PC-9 (cell line): ENCODE measurements at regions of chr4 and their contacts with region 1.

Region 1: DNA sequence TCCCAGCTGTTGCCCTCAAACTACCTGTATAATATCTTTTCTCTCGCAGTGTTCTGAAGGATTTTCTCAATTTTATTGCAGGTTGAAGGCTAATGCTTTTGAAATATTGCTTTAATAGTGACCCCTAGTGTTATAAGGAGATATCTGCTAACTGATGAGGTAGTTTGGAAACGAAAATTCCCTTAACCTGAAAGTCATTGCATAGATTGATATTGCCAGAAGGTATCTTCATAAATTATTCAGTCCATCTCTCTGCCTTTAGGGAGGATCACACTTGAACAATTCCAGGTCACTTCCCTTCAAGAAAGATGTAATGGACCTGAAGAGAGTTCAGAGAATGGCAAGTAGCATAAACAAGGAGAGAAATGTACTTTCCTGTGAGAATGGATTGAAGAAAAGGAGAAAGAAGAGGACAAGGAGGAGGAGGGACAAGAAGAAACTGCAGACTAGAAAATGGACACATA is 44.1 kb downstream of the TIGD4 start:
- DNase-seq: no peak
- H3K4me3 ChIP-seq: no peak overlapping the region
- H3K27ac ChIP-seq: no peak overlapping the region
- H3K4me1 ChIP-seq: no peaks in the 10 kb centered on the region
- H3K27me3 ChIP-seq: no peaks in the 10 kb centered on the region
- CTCF ChIP-seq: peak; percentile 72

Region 2: GRCh38 chr4:151771664-151772063 is 963.8 kb before region 1 on chr4:
- CTCF ChIA-PET with region 1: no interaction called
- POLR2A ChIA-PET with region 1: no interaction called
- intact Hi-C with region 1: no loop called
- DNase-seq: no peak
- H3K4me3 ChIP-seq: no peak overlapping the region
- H3K27ac ChIP-seq: no peak overlapping the region
- H3K4me1 ChIP-seq: no peaks in the 10 kb centered on the region
- H3K27me3 ChIP-seq: no peaks in the 10 kb centered on the region
- CTCF ChIP-seq: no peak

Region 3: DNA sequence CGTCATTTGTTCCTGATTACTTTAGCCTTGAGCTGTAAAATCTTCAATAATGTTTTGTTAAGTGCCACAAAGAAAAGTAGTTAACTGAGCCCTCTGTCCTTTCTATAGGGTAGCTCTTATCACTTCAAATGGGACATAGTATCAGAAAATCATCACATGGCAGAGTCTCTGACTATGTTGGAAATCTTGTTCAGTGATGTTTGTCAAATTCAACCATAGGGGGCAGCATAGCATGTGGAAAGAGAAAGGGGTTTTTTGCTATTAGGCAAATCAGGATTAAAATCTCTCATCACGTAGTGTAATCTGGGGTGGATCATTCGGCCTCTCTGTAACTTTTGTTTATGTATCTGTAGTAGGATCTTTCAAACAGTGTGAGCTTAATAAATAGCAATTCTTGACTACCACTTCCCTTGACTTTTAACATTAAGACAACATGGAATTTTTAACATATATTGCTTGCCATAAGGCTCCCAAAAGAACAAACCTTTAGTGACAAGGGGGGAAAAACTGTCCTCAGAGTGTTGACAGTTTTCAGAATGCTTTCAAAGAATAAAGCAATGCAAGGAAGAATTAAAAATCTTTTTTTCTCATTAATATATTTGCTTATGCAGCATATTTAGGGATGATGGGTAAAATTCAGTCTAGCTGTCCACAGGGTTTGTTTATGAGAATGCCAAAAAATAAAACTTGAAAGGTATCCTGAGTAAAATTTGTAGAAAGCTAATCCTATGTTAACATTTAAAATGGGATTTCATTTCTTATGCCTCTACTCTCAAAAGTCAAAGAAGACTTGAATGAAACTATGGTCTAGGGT is 326.7 kb before region 1 on chr4:
- CTCF ChIA-PET with region 1: interaction called, 11 read pairs
- POLR2A ChIA-PET with region 1: no interaction called
- intact Hi-C with region 1: loop called (anchors 10 kb)
- DNase-seq: peak in 1 of 2 experiments; percentile 6
- H3K4me3 ChIP-seq: no peak overlapping the region
- H3K27ac ChIP-seq: no peak overlapping the region
- H3K4me1 ChIP-seq: no peaks in the 10 kb centered on the region
- H3K27me3 ChIP-seq: no peaks in the 10 kb centered on the region
- CTCF ChIP-seq: peak; percentile 65

Region 4: GRCh38 chr4:152640058-152640833 is 95.2 kb before region 1 on chr4:
- CTCF ChIA-PET with region 1: no interaction called
- POLR2A ChIA-PET with region 1: no interaction called
- intact Hi-C with region 1: loop called (anchors 5 kb)
- DNase-seq: peak in 1 of 2 experiments; percentile 37
- H3K4me3 ChIP-seq: no peak overlapping the region
- H3K27ac ChIP-seq: no peak overlapping the region
- H3K4me1 ChIP-seq: no peaks in the 10 kb centered on the region
- H3K27me3 ChIP-seq: no peaks in the 10 kb centered on the region
- CTCF ChIP-seq: peak; percentile 79